Aorta (tissue), 5 donors: ENCODE measurements at regions of chr6 and their contacts with region 1.

Region 1: DNA sequence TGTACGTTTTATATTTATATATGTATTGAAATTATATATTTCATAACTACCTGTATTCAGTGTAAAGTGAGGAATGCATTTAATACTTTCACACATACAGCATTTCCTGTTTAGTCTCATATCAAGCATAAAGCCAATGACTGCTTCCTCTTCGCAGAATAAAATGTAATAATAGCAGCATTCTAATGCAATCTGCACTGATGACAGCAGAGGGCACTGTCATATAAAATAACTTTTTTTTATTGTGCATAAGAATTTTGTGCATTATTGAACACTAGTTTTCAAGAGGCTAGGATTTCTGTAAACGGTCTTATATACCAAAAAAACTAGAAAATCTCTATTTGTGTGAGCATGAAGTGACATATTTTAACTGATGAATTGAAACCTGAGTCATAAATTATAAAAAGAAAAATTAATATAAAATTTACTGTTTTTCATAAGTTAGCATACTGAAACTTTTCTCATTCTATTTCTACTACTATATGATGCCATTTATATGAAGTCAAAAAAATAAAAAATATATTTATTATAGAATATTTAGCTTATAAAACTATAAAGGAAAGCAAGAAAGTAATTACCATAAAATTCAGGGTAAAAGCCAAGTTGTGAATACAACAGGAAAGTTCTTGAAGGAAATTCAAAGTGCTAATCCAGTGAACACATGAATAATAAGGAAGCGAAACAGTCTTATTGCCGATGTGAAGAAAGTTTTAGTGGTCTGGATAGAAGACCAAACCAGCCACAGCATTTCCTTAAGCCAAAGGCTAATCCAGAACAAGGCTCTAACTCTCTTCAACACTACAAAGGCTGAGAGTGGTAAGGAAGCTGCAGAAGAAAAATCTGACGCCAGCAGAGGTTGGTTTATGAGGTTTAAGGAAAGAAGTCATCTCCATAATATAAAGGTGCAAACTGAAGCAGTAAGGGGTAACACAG is 36.3 kb downstream of the RNF146 start:
- DNase-seq: no peak
- ATAC-seq: peak; percentile 82
- H3K4me3 ChIP-seq: no peak overlapping the region
- H3K27ac ChIP-seq: no peak overlapping the region
- H3K4me1 ChIP-seq: no peaks in the 10 kb centered on the region
- H3K27me3 ChIP-seq: no peaks in the 10 kb centered on the region

Region 2: DNA sequence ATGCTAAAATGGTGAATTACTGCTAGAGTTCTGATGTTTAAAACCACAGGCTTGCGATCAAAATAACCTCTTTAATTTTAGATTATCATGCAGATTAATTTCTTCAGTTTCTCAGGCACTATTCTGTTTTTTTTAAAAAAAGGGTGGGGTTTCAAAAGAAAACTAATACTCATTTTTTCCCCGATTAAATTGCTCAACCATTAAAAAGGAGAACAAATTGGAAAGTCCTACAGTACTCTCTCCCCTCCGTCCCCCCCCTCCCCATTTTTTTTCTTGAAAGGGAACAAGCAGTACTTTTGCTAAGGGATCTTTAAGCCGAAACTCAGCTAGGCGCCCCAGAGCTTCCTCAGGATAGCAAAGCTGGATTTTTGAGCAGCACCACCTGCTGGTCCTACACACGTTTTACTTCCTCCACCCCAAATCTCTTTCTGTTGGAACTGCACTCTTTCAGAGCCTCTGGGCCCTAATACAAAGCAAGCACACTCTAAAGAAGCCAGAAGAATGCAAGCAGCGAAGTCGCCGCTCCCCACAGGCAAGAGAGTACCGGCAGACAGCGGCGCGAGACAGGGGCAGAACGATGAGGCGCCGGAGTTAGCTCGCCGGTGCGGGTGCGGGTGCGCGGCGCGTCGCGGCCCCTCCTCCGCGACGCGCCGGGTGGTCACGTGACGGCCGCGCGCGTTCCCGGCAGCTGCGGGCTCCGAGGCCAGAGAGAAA is 36.7 kb before region 1 on chr6 and contains the start of gene RNF146:
- intact Hi-C with region 1: loop called in 1 of 2 experiments (anchors 5 kb)
- DNase-seq: peak; percentile 88 to 93
- ATAC-seq: peak; percentile 97
- H3K4me3 ChIP-seq: peak within 1 kb of the TSS; percentile 83
- H3K27ac ChIP-seq: peak within 1 kb of the TSS; percentile 94 to 99
- H3K4me1 ChIP-seq: peaks cover 0 to 1% of the 10 kb centered on the region in 2 donors
- H3K27me3 ChIP-seq: no peaks in the 10 kb centered on the region
- total RNA-seq, gene RNF146: 63.9 to 65.2 TPM

Region 3: DNA sequence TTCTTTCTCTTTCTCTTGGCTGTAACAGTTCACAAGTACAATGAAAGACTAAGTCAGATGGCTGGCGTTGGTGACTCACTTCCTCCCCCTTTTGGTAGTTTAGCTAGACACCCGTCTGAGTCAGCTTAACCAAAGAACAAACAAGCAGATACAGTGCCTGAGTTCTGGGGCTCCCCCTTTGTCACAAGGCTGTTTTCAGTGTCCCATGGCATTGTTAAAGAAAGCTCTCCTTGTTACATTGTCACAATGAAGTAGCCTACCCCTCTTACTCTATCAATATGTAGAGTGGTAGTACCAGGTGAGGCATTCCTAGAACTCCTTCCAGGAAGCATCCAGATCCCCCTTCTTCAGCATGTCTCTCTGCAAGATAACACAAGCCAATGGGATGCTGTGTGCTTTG is 117.6 kb after region 1 on chr6:
- intact Hi-C with region 1: no loop called
- DNase-seq: peak in 1 of 2 donors; percentile 80
- ATAC-seq: peak; percentile 93
- H3K4me3 ChIP-seq: no peak overlapping the region
- H3K27ac ChIP-seq: no peak overlapping the region
- H3K4me1 ChIP-seq: no peaks in the 10 kb centered on the region
- H3K27me3 ChIP-seq: no peaks in the 10 kb centered on the region

Region 4: GRCh38 chr6:127539272-127539671 is 236.3 kb after region 1 on chr6:
- intact Hi-C with region 1: loop called (anchors 2 to 5 kb)
- DNase-seq: no peak
- ATAC-seq: no peak
- H3K4me3 ChIP-seq: no peak overlapping the region
- H3K27ac ChIP-seq: no peak overlapping the region
- H3K4me1 ChIP-seq: no peaks in the 10 kb centered on the region
- H3K27me3 ChIP-seq: no peaks in the 10 kb centered on the region